ENCODE measurements at regions of chr3 and their contacts with region 1.

Region 1: GRCh38 chr3:94004301-94004910 is 24.0 kb downstream of the STX19 start:
- DNase-seq: no peak
- ATAC-seq: peak; percentile 66
- H3K4me3 Mint-ChIP-seq: peak overlapping the region; percentile 38
- H3K27ac Mint-ChIP-seq: no peak overlapping the region
- H3K4me1 Mint-ChIP-seq: peaks cover 4% of the 10 kb centered on the region
- H3K27me3 Mint-ChIP-seq: no peaks in the 10 kb centered on the region
- CTCF ChIP-seq: no peak

Region 2: DNA sequence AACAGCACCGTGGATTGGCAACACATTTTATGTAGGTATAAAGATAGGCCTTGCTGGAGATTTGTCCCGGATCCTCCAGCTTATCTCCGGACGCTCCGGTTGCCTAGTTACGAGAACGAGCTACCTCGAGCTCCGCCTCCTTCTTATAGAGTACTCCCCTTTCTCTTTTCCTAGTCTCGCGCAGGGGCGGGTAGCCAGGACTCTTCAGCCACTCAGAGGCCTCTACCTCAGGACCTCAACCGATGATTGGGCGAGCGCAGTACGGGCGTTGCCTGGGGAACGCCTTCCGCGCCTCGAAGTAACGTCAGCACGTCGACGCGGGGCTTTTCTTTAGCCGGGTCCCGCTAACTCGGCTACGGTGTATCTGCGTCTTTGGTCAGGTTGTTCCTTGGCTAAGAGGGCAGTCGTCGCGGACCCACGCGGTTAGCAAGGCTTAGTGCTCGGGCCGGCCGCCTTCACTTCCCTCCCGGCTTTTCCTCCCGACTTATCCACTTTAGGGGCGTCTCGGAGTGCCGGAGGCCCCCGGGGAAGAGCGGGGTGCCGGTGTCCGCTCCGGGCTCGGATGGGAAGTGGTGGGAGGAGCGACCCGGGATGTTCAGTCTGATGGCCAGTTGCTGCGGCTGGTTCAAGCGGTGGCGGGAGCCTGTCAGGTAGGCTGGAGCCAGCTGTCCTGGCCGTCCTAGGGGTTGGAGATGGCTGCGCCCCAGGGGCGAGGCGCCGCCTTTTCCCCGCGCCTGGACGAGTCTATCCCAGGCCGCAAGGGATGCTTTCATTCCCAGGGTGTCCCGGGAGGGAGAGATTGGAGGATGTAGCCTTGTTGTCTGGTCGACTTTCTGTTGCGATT is 24.4 kb before region 1 on chr3 and contains the start of gene ARL13B:
- CTCF ChIA-PET with region 1: no interaction called
- POLR2A ChIA-PET with region 1: no interaction called
- intact Hi-C with region 1: loop called (anchors 2 kb)
- DNase-seq: peak; percentile 81
- ATAC-seq: peak; percentile 100
- H3K4me3 Mint-ChIP-seq: peak within 1 kb of the TSS; percentile 89
- H3K27ac Mint-ChIP-seq: peak within 1 kb of the TSS; percentile 89
- H3K4me1 Mint-ChIP-seq: peaks cover 14% of the 10 kb centered on the region
- H3K27me3 Mint-ChIP-seq: no peaks in the 10 kb centered on the region
- CTCF ChIP-seq: no peak
- total RNA-seq, gene ARL13B: 9.9 and 12.1 TPM in 2 replicates

Region 3: DNA sequence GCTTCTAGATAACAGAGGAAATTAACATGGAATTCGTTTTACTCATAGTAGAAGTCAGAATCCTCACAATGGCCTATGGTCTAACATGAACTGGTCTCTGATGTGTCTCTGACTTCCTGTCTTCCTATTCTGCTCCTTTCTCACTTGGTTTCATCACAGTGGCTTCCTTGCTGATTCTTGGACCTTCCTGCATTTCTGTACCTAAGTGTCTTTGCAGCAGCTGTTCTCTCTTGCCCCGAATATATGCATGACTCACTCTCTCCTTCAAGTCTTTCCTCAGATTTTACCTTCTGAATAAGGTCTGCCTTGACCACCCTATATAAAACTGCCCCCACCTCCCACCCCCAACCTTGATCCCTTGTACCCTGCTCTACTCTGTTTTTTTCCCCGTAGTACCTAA is 10.3 kb before region 1 on chr3:
- CTCF ChIA-PET with region 1: no interaction called
- POLR2A ChIA-PET with region 1: no interaction called
- intact Hi-C with region 1: no loop called
- DNase-seq: no peak
- ATAC-seq: no peak
- H3K4me3 Mint-ChIP-seq: no peak overlapping the region
- H3K27ac Mint-ChIP-seq: no peak overlapping the region
- H3K4me1 Mint-ChIP-seq: no peaks in the 10 kb centered on the region
- H3K27me3 Mint-ChIP-seq: no peaks in the 10 kb centered on the region
- CTCF ChIP-seq: no peak

Region 4: GRCh38 chr3:94036909-94037507 is 32.6 kb after region 1 on chr3:
- CTCF ChIA-PET with region 1: no interaction called
- POLR2A ChIA-PET with region 1: no interaction called
- intact Hi-C with region 1: no loop called
- DNase-seq: no peak
- ATAC-seq: no peak
- H3K4me3 Mint-ChIP-seq: no peak overlapping the region
- H3K27ac Mint-ChIP-seq: no peak overlapping the region
- H3K4me1 Mint-ChIP-seq: no peaks in the 10 kb centered on the region
- H3K27me3 Mint-ChIP-seq: no peaks in the 10 kb centered on the region
- CTCF ChIP-seq: peak; percentile 18

Region 5: DNA sequence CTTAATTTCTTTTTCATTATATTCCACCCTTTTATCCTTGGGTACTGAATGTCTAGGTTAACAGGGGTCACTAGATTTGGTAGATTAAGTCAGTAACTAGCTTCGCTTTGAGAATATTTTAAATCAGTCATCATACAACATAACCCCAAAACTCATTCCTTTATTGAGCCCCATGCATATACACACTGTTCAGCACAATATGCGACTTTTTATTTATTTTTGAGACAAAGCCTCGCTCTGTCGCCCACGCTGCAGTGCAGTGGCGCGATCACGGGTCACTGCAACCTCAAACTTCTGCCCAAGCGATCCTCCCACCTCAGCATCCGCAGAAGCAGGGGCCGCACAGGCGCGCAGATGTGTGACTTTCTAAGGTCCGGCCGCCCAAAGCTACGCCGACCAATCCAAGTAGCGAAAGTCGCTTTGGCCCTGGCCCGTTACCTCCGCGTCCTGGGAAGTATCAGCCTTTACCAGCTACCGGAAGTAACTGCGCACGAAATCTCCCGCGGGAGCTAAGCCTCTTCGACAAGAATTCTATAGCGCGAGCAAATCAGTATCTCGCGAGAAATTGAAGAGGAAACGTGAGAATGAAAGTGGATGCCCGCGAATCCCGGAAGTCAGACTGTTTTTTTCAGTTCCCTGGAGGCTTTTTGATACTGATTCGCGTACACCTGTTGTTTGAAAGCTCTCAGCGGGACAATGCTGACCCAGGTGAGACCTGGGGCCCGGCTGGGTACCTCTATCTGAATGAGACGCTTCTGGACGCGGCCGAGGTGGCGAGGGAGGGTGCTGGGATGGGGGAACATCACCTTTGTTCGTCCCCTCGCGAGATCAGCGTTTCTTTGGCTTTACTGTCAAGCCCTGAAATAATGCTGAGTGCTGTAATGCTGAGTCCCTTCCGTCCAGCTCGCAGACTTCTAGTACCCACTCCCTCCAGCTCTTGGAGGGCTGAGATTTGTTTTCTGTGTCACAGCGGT is 58.3 kb after region 1 on chr3 and contains the starts of genes DHFR2 and NSUN3:
- CTCF ChIA-PET with region 1: interaction called, 13 read pairs
- POLR2A ChIA-PET with region 1: interaction called, 5 read pairs
- intact Hi-C with region 1: no loop called
- DNase-seq: peak; percentile 74
- ATAC-seq: peak; percentile 88
- H3K4me3 Mint-ChIP-seq: peak within 1 kb of the TSS; percentile 98
- H3K27ac Mint-ChIP-seq: peak within 1 kb of the TSS; percentile 100
- H3K4me1 Mint-ChIP-seq: peaks cover 42% of the 10 kb centered on the region
- H3K27me3 Mint-ChIP-seq: no peaks in the 10 kb centered on the region
- CTCF ChIP-seq: no peak
- total RNA-seq, gene DHFR2: 4.3 and 5.0 TPM in 2 replicates
- total RNA-seq, gene NSUN3: 18.1 and 20.8 TPM in 2 replicates

Region 6: DNA sequence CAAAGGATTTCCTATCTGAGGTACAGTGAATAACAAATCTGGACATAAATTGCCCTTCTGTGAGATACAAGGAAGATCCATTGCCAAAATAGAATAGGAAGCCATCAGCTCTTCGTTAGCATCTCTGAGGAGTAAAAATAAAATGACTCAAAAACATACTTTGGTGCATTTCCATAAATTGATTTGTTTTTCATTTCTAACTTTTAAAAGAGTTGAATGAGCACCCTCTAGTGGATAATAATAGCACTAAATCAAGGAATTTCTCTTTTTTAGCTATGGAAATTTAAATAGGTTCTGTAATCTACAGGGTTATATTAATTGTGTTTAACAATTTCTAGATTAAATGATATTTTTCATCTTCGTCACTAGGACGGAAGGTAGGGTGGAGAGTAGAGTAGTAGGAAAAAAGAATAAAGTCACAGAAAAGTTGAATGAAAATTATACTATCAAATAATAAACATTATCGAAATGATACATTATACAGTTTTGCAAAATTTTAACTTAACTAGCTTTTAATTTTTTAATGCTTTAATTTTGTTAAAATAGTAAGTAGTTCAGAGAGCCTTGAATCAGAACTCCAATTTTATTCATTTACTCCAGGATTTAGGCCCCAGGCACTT is 64.9 kb after region 1 on chr3:
- CTCF ChIA-PET with region 1: interaction called, 29 read pairs
- POLR2A ChIA-PET with region 1: interaction called, 3 read pairs
- intact Hi-C with region 1: loop called (anchors 1 kb)
- DNase-seq: no peak
- ATAC-seq: no peak
- H3K4me3 Mint-ChIP-seq: no peak overlapping the region
- H3K27ac Mint-ChIP-seq: no peak overlapping the region
- H3K4me1 Mint-ChIP-seq: peaks cover 51% of the 10 kb centered on the region
- H3K27me3 Mint-ChIP-seq: no peaks in the 10 kb centered on the region
- CTCF ChIP-seq: peak; percentile 74

Region 7: DNA sequence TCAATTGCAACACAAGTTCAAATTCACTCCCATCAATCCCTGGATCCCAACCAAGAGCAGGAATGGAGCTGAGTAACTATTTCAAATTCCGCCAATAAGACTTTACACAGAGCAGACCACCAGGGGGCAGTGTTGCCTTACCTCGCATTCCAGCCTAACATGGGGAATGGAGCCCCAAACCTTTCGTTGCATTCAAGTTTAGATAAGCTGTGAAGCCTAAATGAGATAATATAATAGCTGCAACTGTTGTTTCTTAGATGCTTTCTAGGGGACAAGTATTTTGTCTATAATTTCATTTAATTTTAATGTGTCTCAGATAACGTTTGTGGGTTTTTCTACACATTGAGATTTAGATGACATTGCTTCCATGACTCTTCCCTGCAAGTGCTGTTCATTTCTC is 245.2 kb after region 1 on chr3:
- CTCF ChIA-PET with region 1: no interaction called
- POLR2A ChIA-PET with region 1: no interaction called
- intact Hi-C with region 1: loop called (anchors 1 kb)
- DNase-seq: peak; percentile 25
- ATAC-seq: no peak
- H3K4me3 Mint-ChIP-seq: no peak overlapping the region
- H3K27ac Mint-ChIP-seq: no peak overlapping the region
- H3K4me1 Mint-ChIP-seq: no peaks in the 10 kb centered on the region
- H3K27me3 Mint-ChIP-seq: peaks cover 4% of the 10 kb centered on the region
- CTCF ChIP-seq: peak; percentile 55